ENCODE measurements at regions of chr12 and their contacts with region 1.

Region 1: GRCh38 chr12:9732921-9733461 is at the start of gene CLECL1:
- DNase-seq: no peak
- ATAC-seq: peak; percentile 49
- H3K4me3 Mint-ChIP-seq: peak within 1 kb of the TSS; percentile 88
- H3K27ac Mint-ChIP-seq: peak within 1 kb of the TSS; percentile 94
- H3K4me1 Mint-ChIP-seq: peaks cover 84% of the 10 kb centered on the region
- H3K27me3 Mint-ChIP-seq: no peaks in the 10 kb centered on the region
- CTCF ChIP-seq: no peak
- total RNA-seq, gene CLECL1: 111 and 115 TPM in 2 replicates

Region 2: GRCh38 chr12:9702255-9702654 is 30.7 kb before region 1 on chr12:
- CTCF ChIA-PET with region 1: interaction called, 4 read pairs
- POLR2A ChIA-PET with region 1: interaction called, 89 read pairs
- intact Hi-C with region 1: loop called (anchors 1 kb)
- DNase-seq: no peak
- ATAC-seq: peak; percentile 41
- H3K4me3 Mint-ChIP-seq: peak overlapping the region; percentile 65
- H3K27ac Mint-ChIP-seq: peak overlapping the region; percentile 85
- H3K4me1 Mint-ChIP-seq: peaks cover 85% of the 10 kb centered on the region
- H3K27me3 Mint-ChIP-seq: no peaks in the 10 kb centered on the region
- CTCF ChIP-seq: no peak

Region 3: GRCh38 chr12:9707864-9708808 is 24.9 kb before region 1 on chr12:
- CTCF ChIA-PET with region 1: interaction called, 4 read pairs
- POLR2A ChIA-PET with region 1: interaction called, 89 read pairs
- intact Hi-C with region 1: loop called (anchors 1 kb)
- DNase-seq: no peak
- ATAC-seq: peak; percentile 50
- H3K4me3 Mint-ChIP-seq: peak overlapping the region; percentile 59
- H3K27ac Mint-ChIP-seq: peak overlapping the region; percentile 93
- H3K4me1 Mint-ChIP-seq: peaks cover 89% of the 10 kb centered on the region
- H3K27me3 Mint-ChIP-seq: no peaks in the 10 kb centered on the region
- CTCF ChIP-seq: peak; percentile 23

Region 4: GRCh38 chr12:9760699-9761418 is 27.9 kb after region 1 on chr12 and contains the start of gene CD69:
- CTCF ChIA-PET with region 1: no interaction called
- POLR2A ChIA-PET with region 1: interaction called, 45 read pairs
- intact Hi-C with region 1: loop called (anchors 2 kb)
- DNase-seq: peak; percentile 33
- ATAC-seq: peak; percentile 54
- H3K4me3 Mint-ChIP-seq: peak within 1 kb of the TSS; percentile 90
- H3K27ac Mint-ChIP-seq: peak within 1 kb of the TSS; percentile 93
- H3K4me1 Mint-ChIP-seq: peaks cover 81% of the 10 kb centered on the region
- H3K27me3 Mint-ChIP-seq: no peaks in the 10 kb centered on the region
- CTCF ChIP-seq: no peak
- total RNA-seq, gene CD69: 23.7 and 26.7 TPM in 2 replicates

Region 5: GRCh38 chr12:9827209-9827888 is 94.4 kb after region 1 on chr12 and contains the start of gene KLRF1:
- CTCF ChIA-PET with region 1: no interaction called
- POLR2A ChIA-PET with region 1: no interaction called
- intact Hi-C with region 1: no loop called
- DNase-seq: no peak
- ATAC-seq: no peak
- H3K4me3 Mint-ChIP-seq: no peak within 1 kb of the TSS
- H3K27ac Mint-ChIP-seq: no peak within 1 kb of the TSS
- H3K4me1 Mint-ChIP-seq: no peaks in the 10 kb centered on the region
- H3K27me3 Mint-ChIP-seq: peaks cover 17% of the 10 kb centered on the region
- CTCF ChIP-seq: no peak
- total RNA-seq, gene KLRF1: 0.34 and 0.67 TPM in 2 replicates